Activated T-helper 1 cell treated with anti-CD3 and anti-CD28 coated beads, Interleukin-12 subunit alpha, Interleukin-12 subunit beta, Interleukin-2, Interleukin-4 antibody, amounts not matched to agents 30 ng/mL and 10 ng/mL and 1 ng/mL, durations not matched to agents 14 hours and 24 hours and 36 hours (primary cell): ENCODE measurements at regions of chr2 and their contacts with region 1.

Region 1: DNA sequence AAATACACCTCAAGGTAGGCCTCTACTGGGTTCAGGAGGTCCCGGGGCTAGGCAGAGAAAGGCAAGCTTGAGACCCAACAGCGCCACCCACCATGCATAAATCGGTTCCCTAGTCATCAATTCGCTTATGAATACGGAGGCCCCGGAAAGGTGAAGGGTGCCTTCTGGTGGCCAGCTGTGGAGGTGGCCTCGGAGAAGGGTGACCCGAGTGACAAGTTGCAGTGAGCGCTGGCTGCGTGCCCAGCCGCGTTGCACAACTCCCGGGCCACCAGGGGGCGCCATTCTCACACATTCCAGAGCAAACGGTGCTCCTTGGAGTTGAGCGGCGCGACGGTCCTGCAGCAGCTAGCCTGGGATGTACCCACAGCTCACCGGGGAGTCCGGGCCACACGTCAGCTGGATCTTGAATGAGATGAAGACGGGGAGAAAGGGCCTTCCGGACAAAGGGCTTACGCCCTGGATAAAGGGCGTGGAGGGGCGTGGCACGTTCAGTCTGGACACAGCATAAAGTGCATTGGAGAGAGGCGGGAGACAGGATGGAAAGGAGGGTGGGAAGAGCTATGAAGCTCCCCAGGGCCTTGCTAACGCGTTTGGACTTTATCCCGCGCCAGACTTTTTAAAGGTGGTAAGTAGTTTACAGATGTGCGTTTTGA is 20.4 kb downstream of the TMSB10 start:
- DNase-seq: peak; percentile 95
- H3K4me3 Mint-ChIP-seq: peak overlapping the region; percentile 96
- H3K27ac Mint-ChIP-seq: peak overlapping the region; percentile 95
- H3K4me1 Mint-ChIP-seq: peaks cover 46% of the 10 kb centered on the region
- H3K27me3 Mint-ChIP-seq: no peaks in the 10 kb centered on the region

Region 2: GRCh38 chr2:84459018-84459943 is 466.6 kb before region 1 on chr2 and contains the start of gene SUCLG1:
- intact Hi-C with region 1: loop called (anchors 1 kb)
- DNase-seq: peak; percentile 82
- H3K4me3 Mint-ChIP-seq: peak within 1 kb of the TSS; percentile 94
- H3K27ac Mint-ChIP-seq: peak within 1 kb of the TSS; percentile 97
- H3K4me1 Mint-ChIP-seq: peaks cover 52% of the 10 kb centered on the region
- H3K27me3 Mint-ChIP-seq: no peaks in the 10 kb centered on the region
- total RNA-seq, gene SUCLG1: 66.6 and 73.0 TPM in 2 replicates

Region 3: DNA sequence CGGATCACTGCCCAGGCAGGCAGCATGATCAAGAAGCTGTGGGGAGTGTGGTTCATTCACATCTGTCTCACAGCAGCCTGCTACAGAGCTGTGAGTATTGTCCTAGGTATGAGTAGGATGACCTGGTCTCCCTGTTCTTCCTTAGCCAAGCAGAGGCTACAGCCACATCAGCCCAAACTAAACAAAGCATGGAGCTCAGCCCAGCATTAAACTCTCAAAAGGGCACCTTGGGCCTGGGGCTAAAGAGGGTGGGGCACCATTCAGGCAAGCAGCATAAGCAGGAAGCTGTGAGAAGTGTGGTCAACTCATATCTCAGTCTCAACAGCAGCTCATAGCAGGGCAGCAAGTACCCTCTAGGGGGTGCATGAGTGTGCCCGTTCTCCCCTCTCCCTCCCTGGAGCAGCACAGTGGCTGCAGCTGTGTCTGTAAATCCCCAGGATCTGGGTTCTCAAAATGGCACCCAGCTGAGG is 184.5 kb before region 1 on chr2:
- intact Hi-C with region 1: loop called (anchors 2 kb)
- DNase-seq: peak; percentile 21
- H3K4me3 Mint-ChIP-seq: no peak overlapping the region
- H3K27ac Mint-ChIP-seq: no peak overlapping the region
- H3K4me1 Mint-ChIP-seq: peaks cover 11% of the 10 kb centered on the region
- H3K27me3 Mint-ChIP-seq: peaks cover 1% of the 10 kb centered on the region

Region 4: DNA sequence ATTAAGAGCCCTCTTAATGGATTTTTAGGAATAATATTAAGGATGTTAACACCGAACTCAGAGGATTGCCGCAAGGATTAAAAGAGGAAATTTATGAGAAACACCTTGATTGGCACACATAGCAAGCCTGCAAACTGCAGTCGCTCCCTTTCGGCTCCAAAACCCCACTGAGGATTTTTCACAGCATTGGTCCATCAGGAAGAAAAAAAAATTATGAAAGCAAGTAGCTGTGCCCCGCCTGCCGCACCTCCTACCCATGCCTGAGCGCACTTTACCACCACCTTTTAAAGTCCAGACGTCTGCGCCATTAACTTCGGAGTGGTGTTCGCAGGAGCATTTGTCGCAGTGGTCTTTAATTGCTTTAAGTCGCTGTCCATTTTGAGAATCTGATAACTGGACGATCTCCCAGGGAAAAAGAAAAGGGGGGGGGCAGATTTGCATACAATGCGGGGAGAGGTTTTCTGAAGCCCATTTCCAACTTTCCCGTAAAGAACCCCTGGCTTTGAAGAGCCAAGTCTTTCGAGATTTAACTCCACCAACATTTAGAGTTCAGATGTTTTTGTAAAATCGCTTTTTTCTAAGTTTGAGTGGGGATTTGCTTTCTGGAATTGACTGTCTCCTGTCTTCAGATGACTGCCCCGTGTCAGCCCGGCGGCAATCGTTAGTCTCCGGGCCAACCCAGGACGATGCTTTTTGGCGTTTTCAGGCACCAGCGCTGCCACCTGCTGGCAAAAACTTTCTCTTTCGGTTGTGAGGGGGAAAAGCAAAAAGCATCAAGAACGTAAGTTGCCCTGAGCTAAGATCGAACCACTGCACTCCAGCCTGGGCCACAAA is 44.1 kb before region 1 on chr2:
- intact Hi-C with region 1: loop called (anchors 1 kb)
- DNase-seq: peak; percentile 81
- H3K4me3 Mint-ChIP-seq: peak overlapping the region; percentile 97
- H3K27ac Mint-ChIP-seq: peak overlapping the region; percentile 99
- H3K4me1 Mint-ChIP-seq: peaks cover 71% of the 10 kb centered on the region
- H3K27me3 Mint-ChIP-seq: no peaks in the 10 kb centered on the region

Region 5: DNA sequence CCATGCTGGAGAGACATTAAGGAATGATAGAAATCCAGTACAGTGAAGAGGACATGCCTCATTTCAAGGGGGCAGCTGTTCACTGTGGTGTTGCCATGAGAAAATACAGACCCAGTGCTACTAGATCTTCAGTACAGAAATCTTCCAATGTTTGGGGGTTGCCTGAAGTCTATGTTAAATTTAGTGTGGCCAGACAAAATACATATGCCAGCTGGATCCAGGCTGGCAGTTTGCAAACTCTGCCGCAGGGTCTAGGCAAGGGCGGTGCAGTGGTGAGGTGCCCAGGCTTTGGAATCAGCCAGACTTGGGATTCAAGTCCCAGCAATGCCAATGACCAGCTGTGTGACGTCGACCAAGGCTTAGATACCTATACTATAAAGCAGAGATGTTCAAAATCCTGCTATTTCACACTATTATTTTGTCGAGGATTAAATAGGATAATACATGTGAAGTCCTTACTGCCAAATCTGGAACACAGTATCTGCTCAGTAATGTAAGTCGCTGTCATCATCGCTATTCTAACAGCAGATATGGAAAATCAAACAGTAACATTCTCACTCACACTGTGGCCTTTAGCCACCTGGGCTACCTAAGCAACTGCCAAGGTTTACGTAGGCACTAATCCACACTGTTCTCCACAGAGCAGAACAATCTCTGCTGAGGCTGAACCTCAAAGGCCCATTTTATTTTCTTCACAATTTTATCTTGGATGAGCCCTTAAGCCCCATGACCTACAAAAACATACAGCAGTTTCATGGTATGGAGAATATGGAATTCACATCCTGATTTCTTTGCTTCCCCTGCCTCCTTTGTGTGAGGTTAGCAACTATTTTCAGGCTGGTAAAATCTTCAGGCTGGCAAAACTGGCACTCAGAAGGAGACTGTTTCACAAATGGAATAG is 26.3 kb before region 1 on chr2:
- intact Hi-C with region 1: no loop called
- DNase-seq: no peak
- H3K4me3 Mint-ChIP-seq: no peak overlapping the region
- H3K27ac Mint-ChIP-seq: peak overlapping the region; percentile 11
- H3K4me1 Mint-ChIP-seq: peaks cover 92% of the 10 kb centered on the region
- H3K27me3 Mint-ChIP-seq: no peaks in the 10 kb centered on the region

Region 6: DNA sequence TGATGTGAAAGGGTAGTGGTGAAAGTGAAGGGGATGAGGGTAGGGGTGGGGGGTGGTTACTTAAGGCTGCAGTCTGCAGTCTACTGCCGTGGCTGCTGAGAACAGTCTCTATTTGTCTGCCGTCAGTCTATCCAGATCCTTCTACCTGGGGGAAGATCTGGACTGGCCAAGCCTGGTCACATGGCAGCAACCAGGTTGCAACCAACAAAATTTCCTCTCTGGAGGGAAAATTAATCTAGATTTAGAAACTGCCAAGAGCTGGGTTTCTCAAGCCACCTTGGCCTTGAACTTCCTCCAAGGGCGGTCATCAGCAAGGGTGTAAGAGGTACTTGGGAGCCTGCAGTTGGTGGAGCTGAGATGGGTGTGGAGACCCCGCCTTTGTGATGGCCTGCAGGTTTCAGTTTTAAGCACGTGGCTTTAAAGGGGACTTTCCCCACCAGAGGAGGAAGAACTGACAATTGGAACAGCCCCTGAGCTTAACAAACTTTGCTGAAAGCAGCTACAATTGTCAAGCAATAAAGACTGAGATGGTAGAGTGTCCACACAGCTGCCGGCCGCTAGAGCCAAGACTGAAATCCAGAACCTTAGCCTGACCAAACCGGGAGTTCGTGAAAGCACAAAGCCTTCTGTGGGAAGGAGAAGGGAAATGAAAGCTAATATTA is 13.7 kb after region 1 on chr2:
- intact Hi-C with region 1: loop called (anchors 1 kb)
- DNase-seq: peak; percentile 83
- H3K4me3 Mint-ChIP-seq: peak overlapping the region; percentile 74
- H3K27ac Mint-ChIP-seq: peak overlapping the region; percentile 96
- H3K4me1 Mint-ChIP-seq: peaks cover 54% of the 10 kb centered on the region
- H3K27me3 Mint-ChIP-seq: no peaks in the 10 kb centered on the region

Region 7: DNA sequence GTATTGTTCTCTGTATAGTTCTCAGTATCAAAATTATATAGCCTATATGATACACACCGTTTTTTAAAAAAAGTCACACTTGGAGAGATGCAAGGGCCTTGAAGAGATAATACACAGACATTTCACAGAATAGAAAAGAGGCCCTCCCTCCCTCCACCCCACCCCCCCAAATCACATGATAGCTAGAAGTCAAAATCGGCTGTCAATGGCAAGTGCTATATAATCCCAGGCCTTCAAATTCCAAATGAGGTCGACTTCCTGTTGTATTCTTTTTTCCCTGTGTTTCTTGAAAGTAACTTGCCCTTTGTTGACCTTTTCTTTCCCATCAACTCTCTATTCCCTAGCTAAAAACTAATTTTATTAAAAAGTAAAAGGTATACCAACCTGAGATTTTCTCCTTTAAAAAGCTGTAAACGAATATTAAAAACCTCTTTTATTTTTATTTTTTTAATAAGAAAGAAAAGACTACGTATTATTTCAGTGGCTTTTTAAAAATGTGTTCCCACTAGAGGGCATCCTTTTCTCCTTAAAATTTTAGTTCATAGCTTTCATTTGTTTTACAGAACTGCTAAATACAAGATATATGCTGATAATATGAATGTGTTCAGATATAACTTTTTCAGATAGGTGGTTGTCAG is 91.7 kb after region 1 on chr2:
- intact Hi-C with region 1: loop called (anchors 1 kb)
- DNase-seq: no peak
- H3K4me3 Mint-ChIP-seq: no peak overlapping the region
- H3K27ac Mint-ChIP-seq: peak overlapping the region; percentile 40
- H3K4me1 Mint-ChIP-seq: peaks cover 50% of the 10 kb centered on the region
- H3K27me3 Mint-ChIP-seq: no peaks in the 10 kb centered on the region